Astrocyte of the cerebellum (primary cell): ENCODE measurements at regions of chr10 and their contacts with region 1.

Region 1: DNA sequence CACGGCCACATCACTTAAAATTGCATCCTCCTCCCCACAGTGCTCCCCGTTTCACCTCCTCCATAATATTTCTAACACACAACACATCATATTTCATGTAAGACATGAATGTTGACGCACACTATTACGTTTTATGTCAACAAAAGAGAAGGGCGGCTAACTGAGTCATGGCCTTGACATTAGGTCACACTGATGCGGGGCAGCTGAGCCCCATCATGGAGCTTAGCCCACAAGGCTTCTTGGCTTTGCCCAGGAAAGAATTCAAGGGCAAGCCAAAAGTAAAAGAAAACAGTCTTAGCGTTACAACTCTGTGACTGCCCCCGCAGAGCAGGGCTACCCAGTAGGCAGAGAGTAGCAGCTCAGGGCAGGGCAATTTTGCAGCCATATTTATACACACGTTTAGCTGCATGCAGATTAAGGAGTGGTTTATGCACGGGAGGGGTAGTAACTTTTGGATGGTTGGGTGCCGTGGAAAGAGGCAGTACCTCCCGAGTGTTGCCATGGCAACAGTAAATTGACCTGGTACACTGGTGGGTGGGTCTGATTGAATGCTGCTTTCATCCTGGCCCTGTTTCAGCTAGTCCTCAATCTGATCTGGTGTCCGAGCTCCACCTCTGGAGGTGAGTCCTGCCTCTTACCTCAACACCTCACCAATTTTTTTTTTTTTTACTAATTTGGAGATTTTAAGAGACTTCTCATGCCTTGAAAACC is 156.2 kb upstream of the FRMD4A start:
- DNase-seq: no peak
- H3K4me3 ChIP-seq: no peak overlapping the region
- CTCF ChIP-seq: no peak

Region 2: DNA sequence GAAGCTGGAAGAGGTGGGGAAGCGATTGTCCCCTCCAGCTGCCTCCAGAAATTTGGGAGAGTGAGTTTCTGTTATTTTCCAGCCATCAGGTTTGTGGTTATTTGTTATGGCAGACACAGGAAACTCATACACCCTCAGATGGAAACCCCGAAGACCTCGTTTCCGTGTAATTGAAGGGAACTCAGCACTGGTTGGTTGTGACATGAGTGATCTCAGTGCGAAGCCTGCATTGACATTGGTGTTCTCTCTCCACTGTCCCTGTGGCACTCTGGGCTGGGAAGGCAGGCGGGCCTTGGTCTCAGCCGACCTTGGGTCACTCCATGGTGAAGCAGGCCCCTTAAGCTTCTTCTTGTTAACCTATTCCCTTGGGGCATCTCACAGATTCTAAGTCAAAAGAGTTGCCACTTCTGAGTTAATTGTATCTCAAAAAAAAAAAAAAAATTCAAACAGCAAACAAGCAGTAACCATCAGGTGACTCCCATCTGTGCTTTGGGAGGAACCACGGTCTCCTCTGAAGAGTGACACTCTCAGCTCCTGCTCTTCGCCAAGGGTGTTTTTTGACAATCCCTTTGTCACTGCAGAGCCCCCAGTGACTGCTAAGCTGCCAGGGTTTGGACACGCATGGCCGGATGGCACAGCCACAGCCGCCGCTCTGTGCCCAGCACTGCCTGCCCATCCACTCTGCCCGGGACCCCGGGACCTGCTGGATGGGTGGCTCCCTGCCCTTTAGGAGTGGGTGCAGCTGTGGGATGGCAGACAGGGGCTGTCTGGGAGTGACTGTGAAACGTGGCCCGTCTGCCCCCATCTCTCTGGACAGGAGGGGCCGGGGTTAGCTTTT is 666.6 kb before region 1 on chr10:
- in situ Hi-C with region 1: loop called (anchors 10 kb)
- DNase-seq: no peak
- H3K4me3 ChIP-seq: no peak overlapping the region
- CTCF ChIP-seq: no peak

Region 3: DNA sequence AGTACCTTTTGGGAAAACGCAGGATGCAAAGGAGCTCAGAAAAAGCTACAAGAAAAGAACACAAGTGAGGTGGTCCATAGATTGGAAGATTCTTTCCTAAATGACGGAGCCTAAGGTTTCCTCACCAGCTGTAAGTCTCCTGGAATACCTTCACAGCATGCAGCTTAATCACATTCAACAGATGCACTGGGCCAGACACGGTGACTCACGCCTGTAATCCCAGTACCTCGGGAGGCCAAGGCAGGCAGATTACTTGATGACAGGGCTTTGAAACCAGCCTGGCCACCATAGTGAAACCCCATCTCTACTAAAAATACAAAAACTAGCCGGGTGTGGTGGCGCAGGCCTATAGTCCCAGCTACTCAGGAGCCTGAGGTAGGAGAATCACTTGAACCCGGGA is 384.9 kb before region 1 on chr10:
- in situ Hi-C with region 1: loop called (anchors 10 kb)
- DNase-seq: peak; percentile 49
- H3K4me3 ChIP-seq: no peak overlapping the region
- CTCF ChIP-seq: no peak

Region 4: DNA sequence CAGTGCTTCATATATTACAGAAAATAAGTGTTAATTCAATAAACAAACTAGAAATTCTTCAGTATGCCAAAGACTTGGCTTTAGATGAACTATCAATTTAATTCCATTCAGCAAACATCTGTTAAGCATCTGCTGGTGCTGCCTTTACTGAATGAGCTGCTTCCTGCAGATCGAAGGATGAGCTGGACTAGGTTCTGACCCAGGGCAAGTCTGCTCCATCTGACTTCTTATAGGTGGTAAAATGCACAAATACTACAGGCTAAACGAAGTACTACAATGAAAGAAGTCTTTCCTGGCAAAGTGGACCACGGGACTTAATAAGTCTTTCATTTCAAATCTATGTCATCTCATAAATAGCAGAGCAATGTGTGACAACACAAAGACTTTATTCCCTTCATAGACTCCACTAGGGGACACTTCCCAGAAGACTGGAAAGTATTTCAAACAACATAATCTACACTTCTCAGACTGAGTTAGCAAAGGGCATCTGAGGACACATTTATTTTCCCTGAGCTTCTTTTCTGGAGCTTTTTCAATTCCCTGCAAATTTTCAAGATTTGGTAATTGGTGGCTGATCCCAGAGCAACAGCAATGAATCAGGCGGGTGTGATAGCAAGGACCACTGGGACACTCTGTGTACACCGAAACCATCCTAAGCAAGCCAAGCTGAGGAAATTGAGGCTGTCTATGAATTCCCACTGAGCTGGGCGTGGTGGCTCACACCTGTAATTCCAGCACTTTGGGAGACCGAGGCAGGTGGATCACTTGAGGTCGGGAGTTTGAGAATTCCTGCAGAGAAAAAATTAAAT is 47.3 kb before region 1 on chr10:
- in situ Hi-C with region 1: no loop called
- DNase-seq: no peak
- H3K4me3 ChIP-seq: no peak overlapping the region
- CTCF ChIP-seq: no peak